Right cardiac atrium (tissue), 5 donors: ENCODE measurements at regions of chr17 and their contacts with region 1.

Region 1: DNA sequence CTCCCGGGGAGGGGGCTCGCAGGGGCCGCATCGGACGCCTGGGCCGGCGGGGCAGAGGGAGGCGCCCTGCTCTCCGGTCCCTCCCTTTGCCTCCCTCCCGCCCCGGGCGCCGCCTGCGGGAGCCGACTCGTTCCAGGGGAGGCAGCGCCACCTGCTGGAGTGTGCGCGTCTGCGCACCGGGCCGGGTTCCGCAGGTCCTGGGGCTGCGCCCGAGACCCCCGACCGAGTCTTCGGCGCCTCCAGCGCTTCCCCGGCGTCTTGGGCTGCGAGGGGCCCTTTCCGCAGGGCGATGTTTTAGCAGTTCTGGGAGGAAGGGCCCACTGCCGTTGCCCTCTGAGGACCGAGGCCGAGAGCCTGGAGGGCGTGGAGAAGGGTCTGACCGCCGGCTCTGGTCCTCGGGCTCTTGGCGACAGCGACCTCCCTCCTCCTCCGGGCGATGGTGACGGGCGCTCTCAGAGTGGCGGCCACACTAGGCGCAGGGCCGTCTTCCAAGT is 106.3 kb downstream of the SEC14L1 start:
- DNase-seq: peak; percentile 87 to 96 (median 95)
- ATAC-seq: peak; percentile 94 to 95
- H3K4me3 ChIP-seq: peak overlapping the region; percentile 72
- H3K27ac ChIP-seq: no peak overlapping the region
- H3K4me1 ChIP-seq: peaks cover 4% of the 10 kb centered on the region
- H3K27me3 ChIP-seq: no peaks in the 10 kb centered on the region

Region 2: DNA sequence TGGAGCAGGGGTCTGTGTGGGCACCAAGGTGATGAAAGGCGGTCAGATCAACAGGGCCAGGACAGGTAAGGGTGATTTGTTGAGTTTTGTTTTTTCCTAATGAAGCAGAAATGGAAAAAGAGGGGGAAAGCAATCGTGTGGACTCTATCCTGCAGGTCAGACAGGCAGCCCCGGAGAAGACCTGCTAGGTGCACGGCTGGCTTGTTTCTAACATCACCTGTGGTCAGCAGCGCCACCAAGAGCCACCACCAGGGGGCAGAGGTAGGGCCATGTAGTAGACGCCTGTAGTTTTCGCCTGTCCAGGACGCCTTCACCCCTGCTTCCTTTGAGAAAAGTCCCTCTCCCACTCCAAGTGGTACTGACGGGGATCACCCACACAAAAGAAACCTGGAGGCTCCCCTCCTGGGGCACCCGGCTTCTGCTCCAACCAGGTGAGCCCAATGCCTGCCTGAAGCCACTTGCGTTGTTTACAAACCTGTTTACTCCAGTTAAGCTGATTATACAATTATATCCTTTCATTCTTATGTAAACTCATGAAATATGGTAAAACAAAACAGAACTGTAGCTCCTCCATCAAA is 160.6 kb before region 1 on chr17:
- intact Hi-C with region 1: loop called (anchors 2 kb)
- DNase-seq: peak; percentile 86 to 96 (median 93)
- ATAC-seq: peak; percentile 45 to 57
- H3K4me3 ChIP-seq: no peak overlapping the region
- H3K27ac ChIP-seq: no peak overlapping the region
- H3K4me1 ChIP-seq: peaks cover 3% of the 10 kb centered on the region
- H3K27me3 ChIP-seq: no peaks in the 10 kb centered on the region